Vagina (tissue), 2 donors: ENCODE measurements at regions of chr12 and their contacts with region 1.

Region 1: DNA sequence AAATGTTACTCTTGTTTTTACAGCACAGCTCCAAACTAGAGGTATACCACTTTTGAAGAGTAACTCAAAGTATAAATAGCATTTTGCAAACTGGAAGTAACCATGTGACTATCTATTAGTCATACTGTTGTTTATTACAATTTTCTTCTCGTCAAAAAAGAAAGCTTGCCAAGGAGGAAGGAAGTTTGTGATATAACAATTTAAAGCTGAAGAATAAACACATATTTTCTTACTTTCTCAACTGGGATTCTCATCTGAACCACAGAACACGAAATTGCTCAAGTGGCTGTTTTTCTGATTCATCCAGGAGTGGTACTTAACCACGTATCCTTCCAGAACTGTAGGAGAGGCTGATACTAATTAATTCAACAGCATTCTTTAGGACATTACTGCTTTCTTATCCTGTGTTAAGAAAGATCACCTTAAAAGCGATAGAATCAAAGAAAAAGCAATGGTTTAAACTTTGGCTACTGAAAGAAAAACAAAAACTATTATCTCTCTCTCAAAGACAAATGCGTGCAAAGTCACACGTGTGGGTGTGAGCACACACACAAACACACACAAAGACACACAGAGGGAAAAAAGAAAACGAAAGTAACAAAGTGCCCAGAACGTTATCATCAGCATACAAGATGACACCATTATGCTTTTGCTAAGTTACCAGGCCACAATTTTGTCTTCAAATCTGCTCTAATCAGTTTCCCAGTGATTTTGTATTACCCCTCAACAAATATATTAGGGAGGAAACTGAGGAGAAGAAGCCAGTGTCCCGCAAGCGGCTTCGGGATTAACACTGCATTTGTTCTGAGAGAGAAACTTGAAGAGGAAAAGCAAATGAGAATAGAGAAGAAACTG is at the start of gene CLEC2B:
- DNase-seq: no peak
- H3K4me3 ChIP-seq: peak within 1 kb of the TSS; percentile 44 to 50
- H3K27ac ChIP-seq: peak within 1 kb of the TSS; percentile 94
- H3K4me1 ChIP-seq: peaks cover 31% of the 10 kb centered on the region
- H3K27me3 ChIP-seq: no peaks in the 10 kb centered on the region
- CTCF ChIP-seq: no peak
- POLR2A ChIP-seq: peak in 1 of 2 donors; percentile 22
- total RNA-seq, gene CLEC2B: 35.6 TPM

Region 2: DNA sequence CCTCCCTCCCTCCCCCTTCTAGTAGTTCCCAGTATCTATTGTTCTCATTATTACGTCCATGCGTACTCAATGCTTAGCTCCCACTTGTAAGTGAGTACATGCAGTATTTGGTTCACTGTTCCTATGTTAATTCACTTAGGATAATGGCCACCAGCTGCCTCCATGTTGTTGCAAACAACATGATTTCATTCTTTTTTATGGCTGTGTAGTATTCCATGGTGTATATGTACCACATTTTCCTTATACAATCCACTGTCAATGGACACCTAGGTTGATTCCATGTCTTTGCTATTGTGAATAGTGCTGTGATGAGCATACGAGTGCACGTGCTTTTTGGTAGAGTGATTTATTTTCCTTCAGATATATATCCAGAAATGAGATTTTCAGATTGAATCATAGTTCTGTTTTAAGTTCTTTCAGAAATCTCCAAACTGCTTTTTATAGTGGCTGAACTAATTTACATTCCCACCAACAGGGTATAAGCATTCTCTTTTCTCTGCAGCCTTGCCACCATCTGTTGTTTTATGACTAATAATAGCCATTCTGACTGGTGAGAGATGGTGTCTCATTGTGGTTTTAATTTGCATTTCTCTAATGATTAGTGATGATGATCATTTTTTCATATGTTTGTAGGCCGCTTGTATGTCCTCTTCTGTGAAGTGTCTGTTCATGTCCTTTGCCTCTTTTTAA is 278.3 kb after region 1 on chr12:
- intact Hi-C with region 1: no loop called
- DNase-seq: no peak
- H3K4me3 ChIP-seq: no peak overlapping the region
- H3K27ac ChIP-seq: no peak overlapping the region
- H3K4me1 ChIP-seq: peaks cover 3% of the 10 kb centered on the region
- H3K27me3 ChIP-seq: no peaks in the 10 kb centered on the region
- CTCF ChIP-seq: no peak
- POLR2A ChIP-seq: no peak

Region 3: DNA sequence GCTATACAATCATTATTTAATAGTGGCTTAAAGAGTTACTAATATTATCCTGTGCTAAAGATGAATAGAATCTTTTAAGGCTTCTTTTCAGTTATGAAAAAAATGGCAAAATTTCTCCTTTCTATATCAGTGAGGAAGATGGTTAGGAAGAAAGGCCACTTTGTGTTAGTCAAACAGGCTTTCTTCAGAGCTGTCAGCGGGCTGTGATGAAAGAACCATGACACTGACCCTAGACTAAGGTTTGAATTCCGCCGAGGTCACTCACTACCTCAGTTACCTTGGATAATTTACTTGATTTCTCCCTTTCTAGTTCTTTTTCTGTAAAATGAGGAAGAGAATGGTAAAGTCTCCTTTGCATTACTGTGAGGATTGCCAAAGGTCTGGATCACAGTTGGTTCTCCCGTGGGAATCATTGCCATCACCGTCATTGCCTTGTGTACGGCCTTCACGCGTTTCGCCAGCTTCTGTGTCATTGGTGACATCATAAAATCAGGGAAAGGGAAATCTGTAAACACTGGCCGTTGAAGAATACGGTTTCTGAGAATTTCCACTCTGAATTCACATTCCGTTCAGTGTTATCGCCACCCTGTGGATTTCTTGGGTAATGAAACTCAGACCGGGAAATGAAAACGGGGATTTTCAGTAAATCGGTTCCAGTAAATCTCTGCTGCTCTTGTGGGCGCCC is 880.3 kb after region 1 on chr12:
- intact Hi-C with region 1: loop called (anchors 10 kb)
- DNase-seq: peak in 1 of 2 donors; percentile 93
- H3K4me3 ChIP-seq: peak overlapping the region; percentile 32 to 39
- H3K27ac ChIP-seq: peak overlapping the region; percentile 65
- H3K4me1 ChIP-seq: peaks cover 7% of the 10 kb centered on the region
- H3K27me3 ChIP-seq: no peaks in the 10 kb centered on the region
- CTCF ChIP-seq: peak; percentile 84 to 92 (median 91)
- POLR2A ChIP-seq: no peak